ENCODE measurements at regions of chr22 and their contacts with region 1.

Region 1: GRCh38 chr22:43036282-43036829 is 21.4 kb upstream of the PACSIN2 start:
- DNase-seq: no peak
- ATAC-seq: no peak
- H3K4me3 ChIP-seq: no peak overlapping the region
- H3K27ac ChIP-seq: no peak overlapping the region
- H3K4me1 ChIP-seq: no peaks in the 10 kb centered on the region
- H3K27me3 ChIP-seq: no peaks in the 10 kb centered on the region
- CTCF ChIP-seq: no peak

Region 2: GRCh38 chr22:42994881-42995562 is 41.3 kb before region 1 on chr22:
- CTCF ChIA-PET with region 1: interaction called, 5 read pairs
- POLR2A ChIA-PET with region 1: no interaction called
- intact Hi-C with region 1: loop called (anchors 1 kb)
- DNase-seq: peak; percentile 94
- ATAC-seq: peak; percentile 90
- H3K4me3 ChIP-seq: peak overlapping the region; percentile 54
- H3K27ac ChIP-seq: peak overlapping the region; percentile 88
- H3K4me1 ChIP-seq: peaks cover 51% of the 10 kb centered on the region
- H3K27me3 ChIP-seq: no peaks in the 10 kb centered on the region
- CTCF ChIP-seq: no peak

Region 3: GRCh38 chr22:43077121-43077877 is 40.9 kb after region 1 on chr22:
- CTCF ChIA-PET with region 1: interaction called, 10 read pairs
- POLR2A ChIA-PET with region 1: no interaction called
- intact Hi-C with region 1: no loop called
- DNase-seq: no peak
- ATAC-seq: no peak
- H3K4me3 ChIP-seq: no peak overlapping the region
- H3K27ac ChIP-seq: no peak overlapping the region
- H3K4me1 ChIP-seq: peaks cover 4% of the 10 kb centered on the region
- H3K27me3 ChIP-seq: no peaks in the 10 kb centered on the region
- CTCF ChIP-seq: no peak

Region 4: GRCh38 chr22:43168416-43169309 is 132.3 kb after region 1 on chr22:
- CTCF ChIA-PET with region 1: no interaction called
- POLR2A ChIA-PET with region 1: no interaction called
- intact Hi-C with region 1: no loop called
- DNase-seq: no peak
- ATAC-seq: no peak
- H3K4me3 ChIP-seq: no peak overlapping the region
- H3K27ac ChIP-seq: no peak overlapping the region
- H3K4me1 ChIP-seq: no peaks in the 10 kb centered on the region
- H3K27me3 ChIP-seq: no peaks in the 10 kb centered on the region
- CTCF ChIP-seq: no peak

Measured in PC-3 (cell line).